ENCODE measurements at regions of chr14 and their contacts with region 1.

Region 1: GRCh38 chr14:89618811-89619551 is 201.9 kb upstream of the FOXN3 start:
- DNase-seq: peak; percentile 64 to 80 (median 77)
- ATAC-seq: peak; percentile 77
- H3K4me3 ChIP-seq: peak overlapping the region; percentile 82
- H3K4me3 Mint-ChIP-seq: peak overlapping the region; percentile 90 to 100 (median 97)
- H3K27ac ChIP-seq: peak overlapping the region; percentile 84
- H3K27ac Mint-ChIP-seq: peak overlapping the region; percentile 93 to 98 (median 97)
- H3K4me1 ChIP-seq: peaks cover 38 to 49% of the 10 kb centered on the region in 2 donors
- H3K4me1 Mint-ChIP-seq: peaks cover 41 to 74% (median 66%) of the 10 kb centered on the region in 7 donors
- H3K27me3 ChIP-seq: no peaks in the 10 kb centered on the region
- H3K27me3 Mint-ChIP-seq: no peaks in the 10 kb centered on the region

Region 2: GRCh38 chr14:89276424-89276975 is 342.5 kb before region 1 on chr14:
- CTCF ChIA-PET with region 1: no interaction called
- POLR2A ChIA-PET with region 1: no interaction called
- intact Hi-C with region 1: loop called in 1 of 2 experiments (anchors 1 kb)
- DNase-seq: peak in 1 of 9 donors; percentile 86
- ATAC-seq: peak; percentile 74
- H3K4me3 ChIP-seq: no peak overlapping the region
- H3K4me3 Mint-ChIP-seq: peak overlapping the region in 3 of 10 donors; percentile 39 to 75 (median 45)
- H3K27ac ChIP-seq: no peak overlapping the region
- H3K27ac Mint-ChIP-seq: peak overlapping the region in 6 of 9 donors; percentile 23 to 96 (median 47)
- H3K4me1 ChIP-seq: peaks cover 8 to 14% of the 10 kb centered on the region in 2 donors
- H3K4me1 Mint-ChIP-seq: peaks cover 49 to 91% (median 74%) of the 10 kb centered on the region in 7 donors
- H3K27me3 ChIP-seq: no peaks in the 10 kb centered on the region
- H3K27me3 Mint-ChIP-seq: no peaks in the 10 kb centered on the region

Region 3: DNA sequence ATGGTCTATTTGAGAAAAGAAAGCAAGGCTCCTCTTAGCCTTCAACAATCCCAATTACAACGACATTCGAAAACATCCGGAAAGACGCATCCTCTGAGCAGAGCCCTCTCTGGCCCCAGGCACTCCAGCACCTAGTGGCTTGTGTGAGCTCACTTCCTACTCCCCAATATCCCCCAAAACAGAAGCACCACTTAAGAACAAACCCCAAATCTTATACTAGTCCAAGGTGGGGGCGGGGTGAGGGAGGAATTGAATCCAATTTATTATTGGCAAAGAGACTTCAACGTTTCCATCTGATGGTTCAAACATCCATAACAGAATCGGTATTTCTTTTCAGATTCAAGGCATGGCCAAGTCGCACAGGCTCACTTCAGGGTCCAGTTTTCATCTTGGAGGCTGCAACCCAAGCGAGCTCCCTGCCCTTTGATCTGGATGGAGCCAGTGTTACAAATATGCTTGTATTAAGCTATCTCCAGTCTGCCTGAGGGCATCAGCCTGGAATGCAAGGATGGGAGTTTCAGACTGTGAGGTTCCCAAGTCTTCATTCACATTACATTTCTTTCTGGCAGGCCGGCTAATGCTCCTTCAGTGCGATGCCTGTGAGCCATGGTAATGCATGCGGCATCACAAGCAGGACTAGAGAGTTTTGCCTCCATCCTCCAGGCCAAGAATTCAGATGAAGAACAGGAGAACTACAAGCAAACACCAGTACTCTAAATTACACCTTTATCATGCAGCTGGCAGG is 69.4 kb before region 1 on chr14:
- CTCF ChIA-PET with region 1: no interaction called
- POLR2A ChIA-PET with region 1: no interaction called
- intact Hi-C with region 1: loop called in 1 of 2 experiments (anchors 5 kb)
- DNase-seq: no peak
- ATAC-seq: no peak
- H3K4me3 ChIP-seq: no peak overlapping the region
- H3K4me3 Mint-ChIP-seq: peak overlapping the region in 2 of 10 donors; percentile 2 to 18
- H3K27ac ChIP-seq: no peak overlapping the region
- H3K27ac Mint-ChIP-seq: peak overlapping the region in 5 of 9 donors; percentile 14 to 79 (median 65)
- H3K4me1 ChIP-seq: peaks cover 0 to 20% of the 10 kb centered on the region in 2 donors
- H3K4me1 Mint-ChIP-seq: peaks cover 27 to 79% (median 72%) of the 10 kb centered on the region in 7 donors
- H3K27me3 ChIP-seq: no peaks in the 10 kb centered on the region
- H3K27me3 Mint-ChIP-seq: no peaks in the 10 kb centered on the region

Region 4: DNA sequence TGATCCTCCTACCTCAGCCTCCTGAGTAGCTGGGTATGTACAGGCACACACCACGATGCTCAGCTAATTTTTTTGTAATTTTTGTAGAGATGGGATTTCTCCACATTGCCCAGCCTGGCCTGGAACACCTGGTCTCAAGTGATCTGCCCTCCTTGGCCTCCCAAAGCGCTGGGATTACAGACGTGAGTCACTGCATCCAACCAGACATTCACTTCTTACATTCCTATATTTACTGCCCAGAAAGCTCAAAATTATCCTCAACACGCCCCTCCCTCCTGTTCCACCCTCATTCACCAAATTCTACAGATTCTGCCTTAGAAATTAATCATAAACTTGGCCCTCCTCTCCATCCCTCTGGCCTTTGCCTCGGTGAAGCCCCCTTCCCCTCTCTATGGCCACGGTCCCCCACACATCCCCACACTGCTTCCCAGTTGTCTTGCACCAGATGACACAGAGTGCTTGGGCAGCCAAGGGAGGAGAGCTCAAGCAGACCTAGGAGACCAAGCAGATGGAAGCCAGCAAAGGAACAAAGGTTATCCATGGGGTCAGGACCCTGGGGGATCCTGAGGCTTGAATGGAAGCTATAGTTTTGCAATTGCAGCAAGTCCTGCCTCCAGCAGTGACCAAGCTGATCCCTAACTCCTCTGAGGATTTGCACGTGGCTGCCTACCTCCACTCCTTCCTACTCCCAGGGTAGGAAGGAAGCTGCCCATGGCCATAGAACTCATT is 11.3 kb after region 1 on chr14:
- CTCF ChIA-PET with region 1: no interaction called
- POLR2A ChIA-PET with region 1: interaction called, 35 read pairs
- intact Hi-C with region 1: no loop called
- DNase-seq: no peak
- ATAC-seq: no peak
- H3K4me3 ChIP-seq: no peak overlapping the region
- H3K4me3 Mint-ChIP-seq: peak overlapping the region in 4 of 10 donors; percentile 27 to 69 (median 54)
- H3K27ac ChIP-seq: no peak overlapping the region
- H3K27ac Mint-ChIP-seq: peak overlapping the region in 8 of 9 donors; percentile 6 to 94 (median 84)
- H3K4me1 ChIP-seq: peaks cover 18 to 22% of the 10 kb centered on the region in 2 donors
- H3K4me1 Mint-ChIP-seq: peaks cover 24 to 67% (median 52%) of the 10 kb centered on the region in 7 donors
- H3K27me3 ChIP-seq: no peaks in the 10 kb centered on the region
- H3K27me3 Mint-ChIP-seq: no peaks in the 10 kb centered on the region

Region 5: DNA sequence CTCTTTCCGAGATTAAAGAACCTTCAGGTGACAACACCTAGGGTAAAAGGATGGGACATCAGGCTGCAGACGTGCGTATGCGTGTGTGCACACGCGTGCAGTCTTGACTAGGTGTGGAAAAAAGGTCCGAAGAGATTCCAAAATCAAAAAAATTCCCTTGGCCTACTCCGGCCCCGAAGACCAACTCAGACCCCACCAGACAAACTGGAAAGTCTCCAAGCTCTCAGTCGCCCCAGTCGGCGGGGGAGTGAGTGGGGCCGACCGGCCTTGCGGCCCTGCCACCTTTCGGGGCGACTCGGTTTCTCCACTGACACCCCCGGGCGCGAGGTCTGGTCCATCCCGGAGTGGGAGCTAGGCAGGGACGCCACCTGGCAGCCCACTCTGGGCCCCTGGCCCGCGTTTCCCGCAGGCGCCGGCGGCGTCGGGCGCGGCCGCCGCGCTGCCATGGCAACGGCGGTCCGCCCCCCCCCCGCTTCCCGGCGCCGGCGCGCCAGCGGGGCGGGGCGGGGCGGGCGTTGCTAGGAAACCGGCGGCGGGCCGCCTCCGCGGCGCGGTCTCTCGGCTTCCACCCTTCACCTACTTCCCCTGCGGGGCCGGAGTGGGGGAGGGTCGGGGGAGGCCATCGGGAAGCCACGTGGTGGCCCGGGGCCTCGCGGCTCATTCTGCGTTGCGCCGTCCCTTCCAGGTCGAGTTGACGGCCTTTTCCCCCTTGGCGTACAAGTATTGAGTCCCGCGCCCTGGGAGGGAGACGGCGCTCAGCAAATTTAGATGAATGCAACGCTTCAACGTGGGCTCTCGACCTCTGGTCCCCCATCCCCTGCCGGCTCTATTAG is 82.4 kb after region 1 on chr14:
- CTCF ChIA-PET with region 1: no interaction called
- POLR2A ChIA-PET with region 1: interaction called, 5 read pairs
- intact Hi-C with region 1: loop called (anchors 1 kb)
- DNase-seq: peak; percentile 67 to 88 (median 80)
- ATAC-seq: peak; percentile 95
- H3K4me3 ChIP-seq: peak overlapping the region; percentile 76
- H3K4me3 Mint-ChIP-seq: peak overlapping the region; percentile 73 to 93 (median 88)
- H3K27ac ChIP-seq: peak overlapping the region; percentile 69
- H3K27ac Mint-ChIP-seq: peak overlapping the region; percentile 75 to 98 (median 89)
- H3K4me1 ChIP-seq: peaks cover 12 to 23% of the 10 kb centered on the region in 2 donors
- H3K4me1 Mint-ChIP-seq: peaks cover 16 to 73% (median 59%) of the 10 kb centered on the region in 7 donors
- H3K27me3 ChIP-seq: no peaks in the 10 kb centered on the region
- H3K27me3 Mint-ChIP-seq: no peaks in the 10 kb centered on the region

Region 6: GRCh38 chr14:89954070-89955028 is 335.4 kb after region 1 on chr14 and contains the start of gene EFCAB11:
- CTCF ChIA-PET with region 1: no interaction called
- POLR2A ChIA-PET with region 1: no interaction called
- intact Hi-C with region 1: loop called (anchors 1 kb)
- DNase-seq: peak; percentile 80 to 98 (median 97)
- ATAC-seq: peak; percentile 90
- H3K4me3 ChIP-seq: peak within 1 kb of the TSS; percentile 72
- H3K4me3 Mint-ChIP-seq: peak within 1 kb of the TSS; percentile 74 to 98 (median 94)
- H3K27ac ChIP-seq: peak within 1 kb of the TSS; percentile 94
- H3K27ac Mint-ChIP-seq: peak within 1 kb of the TSS; percentile 82 to 98 (median 91)
- H3K4me1 ChIP-seq: peaks cover 16 to 21% of the 10 kb centered on the region in 2 donors
- H3K4me1 Mint-ChIP-seq: peaks cover 21 to 54% (median 43%) of the 10 kb centered on the region in 7 donors
- H3K27me3 ChIP-seq: no peaks in the 10 kb centered on the region
- H3K27me3 Mint-ChIP-seq: no peaks in the 10 kb centered on the region
- total RNA-seq, gene EFCAB11: 1.2 to 8.5 (median 1.9) TPM